ENCODE measurements at regions of chr11 and their contacts with region 1.

Region 1: DNA sequence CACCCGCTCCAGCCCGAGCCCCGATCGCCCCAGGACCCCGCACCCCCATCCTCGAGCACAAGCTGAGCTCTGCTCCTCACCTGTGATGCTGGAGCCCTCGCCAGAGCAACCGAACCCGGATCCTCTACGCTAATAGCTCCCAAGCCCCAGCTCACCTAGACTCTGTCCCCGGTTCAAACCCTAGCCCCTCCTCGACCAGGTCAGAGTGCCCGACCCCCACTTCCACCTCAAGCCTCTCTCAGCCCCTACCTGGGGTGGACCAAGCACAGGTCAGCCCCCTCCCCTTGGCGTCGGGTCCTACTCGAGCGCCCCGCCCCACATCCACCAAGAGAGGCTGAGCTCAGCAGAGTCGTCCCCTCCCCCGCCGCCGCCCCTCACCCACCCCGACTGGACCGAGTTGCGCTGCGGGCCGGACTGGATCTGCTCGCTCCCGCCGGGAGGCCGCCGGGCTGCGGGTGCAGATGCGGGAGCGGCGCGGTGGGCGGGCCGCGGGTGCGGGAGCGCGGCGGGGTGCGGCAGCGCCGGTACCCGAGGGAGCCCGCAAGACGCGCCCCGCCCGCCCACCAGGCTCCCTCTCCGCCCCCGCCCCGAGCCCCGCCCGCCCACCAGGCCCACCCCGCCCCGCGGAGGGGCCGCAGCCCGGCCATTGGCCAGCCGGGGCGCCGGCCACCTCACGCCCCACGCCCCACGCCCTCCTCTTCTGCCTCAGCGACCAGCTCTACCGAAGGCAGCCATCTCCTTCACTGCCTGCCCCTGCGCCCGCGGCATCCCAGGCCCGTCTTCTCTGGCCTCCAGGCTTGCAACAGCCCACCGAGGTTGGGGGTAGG is 577 bp upstream of the DKK3 start:
- DNase-seq: peak in 1 of 10 donors; percentile 6
- ATAC-seq: peak; percentile 65 to 74
- H3K4me3 Mint-ChIP-seq: peak overlapping the region; percentile 65 to 85 (median 77)
- H3K27ac Mint-ChIP-seq: peak overlapping the region in 1 of 10 donors; percentile 44
- H3K4me1 Mint-ChIP-seq: peaks cover 11 to 25% (median 17%) of the 10 kb centered on the region in 4 donors
- H3K27me3 Mint-ChIP-seq: peaks cover 45 to 85% (median 66%) of the 10 kb centered on the region in 5 donors

Region 2: DNA sequence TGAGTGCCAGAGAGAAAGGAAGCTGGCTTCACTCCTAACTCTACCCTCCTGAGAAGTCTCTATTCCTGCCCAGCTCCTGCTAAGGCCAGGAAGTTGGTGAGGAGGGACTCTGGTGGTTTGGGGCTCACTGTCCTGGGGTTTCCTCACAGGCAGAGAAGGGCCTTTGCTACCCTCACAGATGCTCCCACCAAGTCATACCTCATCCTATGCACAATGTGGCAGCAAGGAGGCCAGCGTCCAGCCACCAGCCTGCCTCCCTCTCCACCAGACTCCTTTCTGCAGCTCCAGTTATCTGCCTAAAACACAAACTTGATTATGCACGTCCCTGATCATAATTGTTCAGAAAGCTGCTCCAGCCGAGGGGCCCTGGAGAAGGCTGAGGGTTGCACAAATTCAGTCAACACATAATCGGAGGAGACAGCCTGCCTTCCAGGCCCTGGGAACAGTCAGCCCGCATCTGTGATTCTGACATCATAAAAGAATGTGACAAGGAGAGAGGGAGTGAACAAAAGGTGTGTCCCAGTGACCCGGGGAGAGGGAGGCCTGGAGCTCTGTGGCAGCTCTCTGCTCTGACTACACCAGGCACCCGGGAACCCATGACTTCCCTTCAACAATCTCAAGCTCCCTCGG is 29.4 kb before region 1 on chr11:
- POLR2A ChIA-PET with region 1: no interaction called
- DNase-seq: no peak
- ATAC-seq: no peak
- H3K4me3 Mint-ChIP-seq: no peak overlapping the region
- H3K27ac Mint-ChIP-seq: no peak overlapping the region
- H3K4me1 Mint-ChIP-seq: peaks cover 2 to 15% (median 8%) of the 10 kb centered on the region in 4 donors
- H3K27me3 Mint-ChIP-seq: no peaks in the 10 kb centered on the region

Region 3: GRCh38 chr11:11995601-11996000 is 13.4 kb before region 1 on chr11:
- POLR2A ChIA-PET with region 1: interaction called, 15 read pairs
- DNase-seq: peak in 3 of 10 donors; percentile 15 to 38 (median 35)
- ATAC-seq: peak; percentile 83 to 90
- H3K4me3 Mint-ChIP-seq: peak overlapping the region in 2 of 10 donors; percentile 11 to 38
- H3K27ac Mint-ChIP-seq: peak overlapping the region in 8 of 10 donors; percentile 17 to 94 (median 79)
- H3K4me1 Mint-ChIP-seq: peaks cover 0 to 24% (median 6%) of the 10 kb centered on the region in 4 donors
- H3K27me3 Mint-ChIP-seq: peaks cover 10 to 26% (median 15%) of the 10 kb centered on the region in 5 donors